Posterior vena cava (tissue), 2 donors: ENCODE measurements at regions of chr18 and their contacts with region 1.

Region 1: DNA sequence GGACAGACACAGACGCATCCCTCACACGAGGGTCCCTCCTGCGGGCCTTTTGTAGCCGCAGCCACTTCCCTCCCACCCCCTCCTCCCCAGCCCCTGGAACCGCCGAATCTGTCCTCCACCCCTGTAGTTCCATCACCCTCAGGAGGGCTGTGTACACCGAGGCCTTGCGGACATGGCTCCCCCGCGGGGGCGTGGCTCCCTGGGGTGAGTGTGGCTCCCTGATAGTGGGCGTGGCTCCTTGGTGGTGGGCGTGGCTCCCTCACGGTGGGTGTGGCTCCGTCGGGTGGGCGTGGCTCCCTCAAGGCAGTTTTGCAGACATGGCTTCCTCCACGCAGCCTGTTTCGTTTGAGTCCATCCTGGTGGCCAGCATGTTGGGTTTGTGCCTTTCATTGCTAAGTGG is 420.7 kb upstream of the SALL3 start:
- DNase-seq: peak; percentile 67

Region 2: DNA sequence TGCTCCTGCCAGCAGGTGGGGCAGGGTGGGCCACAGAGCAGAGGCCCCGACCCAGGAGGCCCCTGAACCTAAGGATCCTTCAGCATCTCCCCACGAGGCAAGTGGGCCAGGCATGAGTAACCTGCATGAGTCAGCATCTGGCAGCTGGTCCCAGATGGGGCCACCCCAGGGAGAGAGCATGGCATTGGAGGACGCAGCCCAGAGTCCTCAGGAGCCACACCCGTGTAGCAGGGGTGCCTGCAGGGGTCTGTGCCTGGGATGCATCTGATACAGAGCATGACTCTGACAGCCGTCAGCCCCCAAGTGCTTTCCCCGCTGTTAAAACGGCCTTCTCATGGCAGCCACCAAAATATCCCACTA is 235.1 kb after region 1 on chr18:
- intact Hi-C with region 1: no loop called
- DNase-seq: peak; percentile 37

Region 3: GRCh38 chr18:79657342-79657985 is 1098.5 kb after region 1 on chr18:
- intact Hi-C with region 1: loop called in 1 of 2 experiments (anchors 5 kb)
- DNase-seq: no peak